K562 (cell line): ENCODE measurements at regions of chr14 and their contacts with region 1.

Region 1: GRCh38 chr14:88492272-88493089 is 62.3 kb downstream of the PTPN21 start:
- DNase-seq: peak; percentile 64 to 75 (median 71)
- ATAC-seq: peak; percentile 95
- H3K4me3 ChIP-seq: no peak overlapping the region
- H3K27ac ChIP-seq: no peak overlapping the region
- H3K4me1 ChIP-seq: no peaks in the 10 kb centered on the region; a peak in 1 of 5 replicates
- H3K27me3 ChIP-seq: no peaks in the 10 kb centered on the region
- CTCF ChIP-seq: peak; percentile 65 to 71 (median 69)
- EP300 ChIP-seq: no peak
- POLR2A ChIP-seq: no peak
- RAD21 ChIP-seq: peak; percentile 46 to 72

Region 2: DNA sequence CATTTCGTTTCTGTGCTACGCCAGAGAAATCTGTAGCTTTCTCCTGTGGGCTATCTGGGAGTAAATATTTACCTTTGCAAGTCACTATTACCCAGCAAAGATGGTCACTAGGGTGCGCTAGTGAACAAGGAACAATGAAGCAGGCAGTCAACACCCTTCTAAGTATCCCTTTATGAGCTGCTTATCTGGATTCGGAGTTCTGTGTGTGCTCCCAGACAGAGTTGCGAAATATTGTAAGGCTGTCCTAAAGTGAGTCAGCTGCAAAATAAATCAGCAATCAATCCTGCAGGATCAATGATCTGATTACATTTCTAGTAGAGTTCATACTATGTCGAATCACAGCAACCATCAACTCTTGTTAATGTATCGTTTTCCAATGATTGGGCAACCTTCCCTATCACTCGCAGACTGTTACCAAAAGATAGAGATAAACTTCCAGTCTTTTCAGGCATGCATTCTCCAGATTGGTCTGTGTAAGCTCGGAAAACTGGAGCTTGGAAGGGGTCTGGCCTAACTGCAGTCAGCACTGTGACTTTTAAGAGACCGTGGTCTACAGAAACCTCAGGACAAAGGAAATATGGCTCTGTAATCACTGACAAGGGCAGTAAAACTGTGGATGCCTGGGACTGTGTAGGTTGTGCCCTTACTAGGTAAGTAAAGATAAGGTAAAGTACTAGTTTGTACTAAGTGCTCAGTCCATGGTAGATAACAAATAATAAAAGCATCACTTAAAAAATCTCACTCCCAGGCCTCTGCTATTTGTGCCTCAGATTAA is 302.9 kb before region 1 on chr14:
- CTCF ChIA-PET with region 1: no interaction called
- POLR2A ChIA-PET with region 1: no interaction called
- in situ Hi-C with region 1: no loop called
- intact Hi-C with region 1: loop called (anchors 5 kb)
- DNase-seq: peak; percentile 26 to 80 (median 43)
- ATAC-seq: peak; percentile 96
- H3K4me3 ChIP-seq: no peak overlapping the region
- H3K27ac ChIP-seq: no peak overlapping the region
- H3K4me1 ChIP-seq: no peaks in the 10 kb centered on the region
- H3K27me3 ChIP-seq: peaks cover 5 to 24% of the 10 kb centered on the region in 2 experiments; a peak in 3 of 5 replicates
- CTCF ChIP-seq: peak; percentile 54 to 75 (median 59); a peak in 5 of 6 replicates
- EP300 ChIP-seq: no peak
- POLR2A ChIP-seq: no peak
- RAD21 ChIP-seq: peak; percentile 42 to 74

Region 3: GRCh38 chr14:88554457-88555286 is 62.2 kb after region 1 on chr14 and contains the start of gene PTPN21:
- CTCF ChIA-PET with region 1: no interaction called
- POLR2A ChIA-PET with region 1: no interaction called
- in situ Hi-C with region 1: no loop called
- intact Hi-C with region 1: loop called (anchors 1 kb)
- DNase-seq: peak; percentile 76 to 83 (median 81)
- ATAC-seq: peak; percentile 91
- H3K4me3 ChIP-seq: peak within 1 kb of the TSS; percentile 59
- H3K27ac ChIP-seq: peak within 1 kb of the TSS; percentile 55; the same call in 1 of the 3 replicates
- H3K4me1 ChIP-seq: peaks cover 0 to 15% of the 10 kb centered on the region in 2 experiments; a peak in 3 of 5 replicates
- H3K27me3 ChIP-seq: no peaks in the 10 kb centered on the region
- CTCF ChIP-seq: no peak
- EP300 ChIP-seq: no peak
- POLR2A ChIP-seq: no peak
- RAD21 ChIP-seq: no peak
- polyA plus RNA-seq, gene PTPN21: 0.06 to 0.22 TPM

Region 4: DNA sequence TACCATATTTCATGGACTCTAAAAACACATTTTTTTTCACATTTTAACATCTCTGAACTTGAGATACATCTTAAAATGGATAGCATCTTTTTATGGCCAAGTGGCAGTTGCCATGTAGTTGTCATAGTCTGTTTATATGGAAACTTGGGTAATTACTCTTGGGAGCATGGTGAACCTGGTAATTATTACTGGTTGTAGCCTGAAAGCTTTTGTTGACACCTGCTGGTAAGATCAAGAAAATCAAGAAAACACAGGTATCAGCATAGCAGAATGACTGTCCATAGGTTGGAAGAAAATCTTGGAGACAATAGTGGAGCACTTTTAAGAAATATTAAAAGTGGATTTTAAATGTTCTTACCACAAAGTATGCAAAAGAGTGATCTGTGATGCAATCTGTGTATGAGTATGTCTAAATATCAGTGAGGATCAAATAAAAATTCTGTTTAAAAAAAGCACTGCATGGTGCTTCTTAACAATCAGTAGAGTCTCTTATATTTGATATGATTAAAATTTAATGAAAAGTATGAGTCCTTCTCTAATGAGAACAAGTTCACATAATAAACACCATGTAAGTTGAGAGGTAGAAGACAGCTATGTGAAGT is 376.2 kb after region 1 on chr14:
- CTCF ChIA-PET with region 1: interaction called, 4 read pairs
- POLR2A ChIA-PET with region 1: no interaction called
- in situ Hi-C with region 1: no loop called
- intact Hi-C with region 1: loop called (anchors 2 kb)
- DNase-seq: peak in 2 of 4 experiments; percentile 5 to 27
- ATAC-seq: peak; percentile 75
- H3K4me3 ChIP-seq: no peak overlapping the region
- H3K27ac ChIP-seq: no peak overlapping the region
- H3K4me1 ChIP-seq: no peaks in the 10 kb centered on the region
- H3K27me3 ChIP-seq: no peaks in the 10 kb centered on the region
- CTCF ChIP-seq: peak; percentile 22 to 63 (median 32); a peak in 3 of 6 replicates
- EP300 ChIP-seq: no peak
- POLR2A ChIP-seq: no peak
- RAD21 ChIP-seq: peak; percentile 52 to 75

Region 5: GRCh38 chr14:89000007-89000942 is 507.8 kb after region 1 on chr14:
- CTCF ChIA-PET with region 1: no interaction called
- POLR2A ChIA-PET with region 1: no interaction called
- in situ Hi-C with region 1: loop called (anchors 25 kb)
- intact Hi-C with region 1: no loop called
- DNase-seq: peak; percentile 48 to 73 (median 54)
- ATAC-seq: peak; percentile 92
- H3K4me3 ChIP-seq: no peak overlapping the region
- H3K27ac ChIP-seq: no peak overlapping the region; the same call in 2 of the 3 replicates
- H3K4me1 ChIP-seq: peaks cover 0 to 10% of the 10 kb centered on the region in 2 experiments; a peak in 3 of 5 replicates
- H3K27me3 ChIP-seq: no peaks in the 10 kb centered on the region
- CTCF ChIP-seq: no peak
- EP300 ChIP-seq: peak; percentile 69
- POLR2A ChIP-seq: no peak
- RAD21 ChIP-seq: no peak